ENCODE measurements at regions of chr5 and their contacts with region 1.

Region 1: DNA sequence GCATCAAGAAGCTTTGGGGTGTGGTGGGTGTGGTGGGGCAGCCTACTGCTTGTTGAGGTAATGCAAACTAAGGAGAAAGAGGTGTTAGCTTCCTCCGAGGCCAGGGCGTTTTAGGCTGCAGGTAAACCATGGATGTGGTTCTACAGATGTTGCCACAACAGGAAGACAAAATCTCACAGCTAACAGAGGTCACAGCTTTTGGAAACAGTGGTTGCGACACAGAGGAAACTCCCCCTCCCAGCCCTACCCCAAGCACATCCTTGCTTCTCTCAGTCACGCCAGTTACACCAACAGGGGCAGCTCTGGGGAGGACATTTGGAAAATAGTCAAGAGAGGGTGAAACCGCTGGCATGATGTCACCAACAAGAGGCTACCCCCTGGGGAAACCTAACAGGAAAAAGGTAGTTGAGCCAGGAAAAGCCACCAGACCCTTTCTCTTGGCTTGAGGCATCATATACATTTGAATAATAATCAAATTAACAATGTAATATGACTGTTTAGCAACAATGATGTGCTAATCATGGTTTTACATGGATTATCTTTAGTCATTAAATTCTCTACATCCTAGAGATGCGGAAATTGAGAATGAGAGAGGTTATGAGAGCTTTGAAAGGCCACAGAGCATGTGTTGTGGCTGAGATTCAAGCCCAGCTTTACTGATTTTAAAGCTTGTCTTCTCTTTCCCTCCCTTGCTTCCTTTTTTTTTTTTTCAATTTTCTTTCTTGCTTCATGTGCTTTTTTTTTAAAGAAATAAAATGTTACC is 82.2 kb upstream of the IL12B start:
- DNase-seq: peak; percentile 86
- ATAC-seq: peak; percentile 87
- H3K4me3 Mint-ChIP-seq: peak overlapping the region; percentile 14
- H3K27ac Mint-ChIP-seq: peak overlapping the region; percentile 53
- H3K4me1 Mint-ChIP-seq: peaks cover 55% of the 10 kb centered on the region
- H3K27me3 Mint-ChIP-seq: peaks cover 2% of the 10 kb centered on the region
- CTCF ChIP-seq: no peak

Region 2: GRCh38 chr5:159336991-159337955 is 75.2 kb before region 1 on chr5:
- CTCF ChIA-PET with region 1: no interaction called
- POLR2A ChIA-PET with region 1: interaction called, 4 read pairs
- intact Hi-C with region 1: loop called (anchors 2 kb)
- DNase-seq: peak; percentile 60
- ATAC-seq: peak; percentile 63
- H3K4me3 Mint-ChIP-seq: no peak overlapping the region
- H3K27ac Mint-ChIP-seq: peak overlapping the region; percentile 9
- H3K4me1 Mint-ChIP-seq: peaks cover 44% of the 10 kb centered on the region
- H3K27me3 Mint-ChIP-seq: no peaks in the 10 kb centered on the region
- CTCF ChIP-seq: no peak

Region 3: GRCh38 chr5:159456722-159457465 is 44.4 kb after region 1 on chr5:
- CTCF ChIA-PET with region 1: interaction called, 9 read pairs
- POLR2A ChIA-PET with region 1: interaction called, 35 read pairs
- intact Hi-C with region 1: loop called (anchors 1 kb)
- DNase-seq: peak; percentile 84
- ATAC-seq: peak; percentile 84
- H3K4me3 Mint-ChIP-seq: no peak overlapping the region
- H3K27ac Mint-ChIP-seq: peak overlapping the region; percentile 60
- H3K4me1 Mint-ChIP-seq: peaks cover 47% of the 10 kb centered on the region
- H3K27me3 Mint-ChIP-seq: peaks cover 20% of the 10 kb centered on the region
- CTCF ChIP-seq: no peak

Measured in activated CD8-positive, alpha-beta T cell treated with anti-CD3 and anti-CD28 coated beads for 36 hours (primary cell).